B cell (primary cell): ENCODE measurements at regions of chr9 and their contacts with region 1.

Region 1: GRCh38 chr9:69637817-69638200 is 34.4 kb downstream of the APBA1 start:
- DNase-seq: no peak
- ATAC-seq: no peak
- H3K4me3 ChIP-seq: no peak overlapping the region
- H3K4me3 Mint-ChIP-seq: no peak overlapping the region
- H3K27ac ChIP-seq: no peak overlapping the region
- H3K27ac Mint-ChIP-seq: no peak overlapping the region
- H3K4me1 ChIP-seq: no peaks in the 10 kb centered on the region
- H3K4me1 Mint-ChIP-seq: no peaks in the 10 kb centered on the region
- H3K27me3 ChIP-seq: peaks cover 0 to 5% (median 1%) of the 10 kb centered on the region in 4 experiments
- H3K27me3 Mint-ChIP-seq: peaks cover 39% of the 10 kb centered on the region
- CTCF ChIP-seq: no peak

Region 2: GRCh38 chr9:69573651-69574050 is 64.2 kb before region 1 on chr9:
- CTCF ChIA-PET with region 1: no interaction called
- POLR2A ChIA-PET with region 1: no interaction called
- intact Hi-C with region 1: loop called (anchors 10 kb)
- DNase-seq: no peak
- ATAC-seq: no peak
- H3K4me3 ChIP-seq: no peak overlapping the region
- H3K4me3 Mint-ChIP-seq: no peak overlapping the region
- H3K27ac ChIP-seq: no peak overlapping the region
- H3K27ac Mint-ChIP-seq: no peak overlapping the region
- H3K4me1 ChIP-seq: no peaks in the 10 kb centered on the region
- H3K4me1 Mint-ChIP-seq: no peaks in the 10 kb centered on the region
- H3K27me3 ChIP-seq: no peaks in the 10 kb centered on the region
- H3K27me3 Mint-ChIP-seq: peaks cover 2% of the 10 kb centered on the region
- CTCF ChIP-seq: no peak